H1 (cell line): ENCODE measurements at regions of chr2 and their contacts with region 1.

Region 1: DNA sequence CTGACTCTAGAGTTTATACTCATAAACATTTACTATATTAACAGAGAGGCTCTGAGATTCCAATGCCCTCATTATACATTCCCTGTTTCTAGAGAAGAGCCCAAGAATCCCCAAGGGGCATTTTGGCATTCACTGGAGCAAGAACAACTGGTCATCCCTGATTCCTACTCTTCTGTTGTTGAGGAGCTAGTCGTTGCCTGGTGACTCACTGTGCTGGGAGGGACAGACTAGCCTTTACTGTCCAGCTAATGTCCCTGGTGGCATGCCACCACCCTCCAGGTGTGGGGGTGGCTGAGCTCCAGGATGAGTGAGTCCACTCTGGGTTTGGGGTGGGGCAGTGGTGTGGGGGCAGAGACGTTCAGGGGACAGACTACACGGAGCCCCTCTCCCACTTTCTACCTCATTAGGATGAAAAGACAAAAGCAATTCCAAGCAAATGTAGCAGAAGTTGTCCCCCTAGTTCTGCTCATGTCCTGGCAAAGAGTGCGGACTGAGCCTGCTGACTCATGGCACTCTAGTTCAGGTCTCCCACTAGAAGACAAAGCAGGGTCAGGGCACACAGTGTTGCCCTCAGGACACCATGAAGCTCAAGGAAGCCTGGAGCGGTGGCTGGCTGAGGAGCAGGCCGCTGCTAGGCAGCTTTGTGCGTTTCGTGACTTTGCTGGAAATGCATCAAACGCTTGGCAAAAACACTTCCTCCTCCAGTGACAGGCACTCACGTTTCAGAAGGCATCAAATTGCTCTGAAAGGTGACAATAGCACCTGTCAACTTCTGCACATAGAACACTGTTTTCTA is 49.4 kb downstream of the RHOB start:
- DNase-seq: no peak
- H3K4me3 ChIP-seq: no peak overlapping the region
- H3K27ac ChIP-seq: no peak overlapping the region
- H3K4me1 ChIP-seq: peaks cover 0 to 2% (median 1%) of the 10 kb centered on the region in 4 experiments; a peak in 2 of 7 replicates
- H3K27me3 ChIP-seq: no peaks in the 10 kb centered on the region
- CTCF ChIP-seq: no peak
- EP300 ChIP-seq: no peak
- POLR2A ChIP-seq: no peak
- RAD21 ChIP-seq: no peak

Region 2: GRCh38 chr2:20313659-20314058 is 182.6 kb before region 1 on chr2:
- CTCF ChIA-PET with region 1: no interaction called
- POLR2A ChIA-PET with region 1: no interaction called
- DNase-seq: no peak
- H3K4me3 ChIP-seq: no peak overlapping the region
- H3K27ac ChIP-seq: no peak overlapping the region
- H3K4me1 ChIP-seq: peaks cover 0 to 3% (median 3%) of the 10 kb centered on the region in 4 experiments; a peak in 3 of 7 replicates
- H3K27me3 ChIP-seq: no peaks in the 10 kb centered on the region
- CTCF ChIP-seq: no peak
- EP300 ChIP-seq: no peak
- POLR2A ChIP-seq: no peak
- RAD21 ChIP-seq: no peak

Region 3: GRCh38 chr2:20452551-20452950 is 43.7 kb before region 1 on chr2:
- CTCF ChIA-PET with region 1: interaction called, 10 read pairs
- POLR2A ChIA-PET with region 1: interaction called, 5 read pairs
- DNase-seq: no peak
- H3K4me3 ChIP-seq: no peak overlapping the region
- H3K27ac ChIP-seq: no peak overlapping the region
- H3K4me1 ChIP-seq: peaks cover 7 to 12% (median 11%) of the 10 kb centered on the region in 4 experiments
- H3K27me3 ChIP-seq: peaks cover 12 to 46% (median 30%) of the 10 kb centered on the region in 4 experiments
- CTCF ChIP-seq: peak in 2 of 3 experiments; percentile 28 to 34; a peak in 2 of 4 replicates
- EP300 ChIP-seq: no peak
- POLR2A ChIP-seq: no peak
- RAD21 ChIP-seq: peak; percentile 50 to 51

Region 4: DNA sequence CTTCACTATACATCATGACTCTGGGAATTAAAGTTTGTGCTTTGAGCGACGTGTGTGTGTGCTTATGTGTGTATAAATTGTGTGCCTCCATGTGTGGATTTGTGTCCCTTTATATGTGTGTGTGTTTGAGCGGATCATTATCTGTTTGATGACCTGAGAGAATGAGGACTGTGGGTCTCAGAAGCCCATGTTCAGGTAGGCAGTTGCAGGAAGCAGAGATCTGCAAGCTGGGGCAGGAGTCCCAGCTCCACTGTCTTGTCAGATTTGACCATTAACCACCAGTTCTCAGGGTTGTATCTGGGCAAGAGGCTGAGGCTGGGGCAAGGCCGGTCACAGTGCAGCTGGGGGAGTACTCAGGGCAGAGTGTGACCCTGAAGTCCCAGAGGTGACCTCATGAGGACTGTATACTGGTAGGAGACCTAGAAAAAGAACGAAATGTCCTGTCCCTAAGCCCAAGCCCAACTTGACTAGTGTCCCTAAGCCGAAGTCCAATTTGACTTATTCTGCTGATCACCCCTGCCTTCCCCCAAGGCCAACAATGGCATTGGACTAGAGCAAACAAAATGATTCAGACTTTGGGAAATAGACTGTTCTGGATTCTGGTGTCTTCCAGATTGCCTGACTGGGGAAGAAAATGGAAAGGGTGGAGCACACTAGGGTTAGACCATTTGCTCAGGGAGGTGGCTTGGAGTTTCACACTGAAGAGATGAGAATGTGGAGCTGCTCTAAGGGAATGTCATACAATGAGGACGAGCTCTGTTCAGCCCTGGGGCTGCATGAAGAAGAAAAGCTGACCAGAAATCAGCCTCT is 21.3 kb before region 1 on chr2:
- CTCF ChIA-PET with region 1: no interaction called
- POLR2A ChIA-PET with region 1: no interaction called
- DNase-seq: no peak
- H3K4me3 ChIP-seq: no peak overlapping the region
- H3K27ac ChIP-seq: no peak overlapping the region
- H3K4me1 ChIP-seq: peaks cover 0 to 2% (median 0%) of the 10 kb centered on the region in 4 experiments; a peak in 1 of 7 replicates
- H3K27me3 ChIP-seq: no peaks in the 10 kb centered on the region
- CTCF ChIP-seq: no peak
- EP300 ChIP-seq: no peak
- POLR2A ChIP-seq: no peak
- RAD21 ChIP-seq: no peak